ENCODE measurements at regions of chr1 and their contacts with region 1.

Region 1: DNA sequence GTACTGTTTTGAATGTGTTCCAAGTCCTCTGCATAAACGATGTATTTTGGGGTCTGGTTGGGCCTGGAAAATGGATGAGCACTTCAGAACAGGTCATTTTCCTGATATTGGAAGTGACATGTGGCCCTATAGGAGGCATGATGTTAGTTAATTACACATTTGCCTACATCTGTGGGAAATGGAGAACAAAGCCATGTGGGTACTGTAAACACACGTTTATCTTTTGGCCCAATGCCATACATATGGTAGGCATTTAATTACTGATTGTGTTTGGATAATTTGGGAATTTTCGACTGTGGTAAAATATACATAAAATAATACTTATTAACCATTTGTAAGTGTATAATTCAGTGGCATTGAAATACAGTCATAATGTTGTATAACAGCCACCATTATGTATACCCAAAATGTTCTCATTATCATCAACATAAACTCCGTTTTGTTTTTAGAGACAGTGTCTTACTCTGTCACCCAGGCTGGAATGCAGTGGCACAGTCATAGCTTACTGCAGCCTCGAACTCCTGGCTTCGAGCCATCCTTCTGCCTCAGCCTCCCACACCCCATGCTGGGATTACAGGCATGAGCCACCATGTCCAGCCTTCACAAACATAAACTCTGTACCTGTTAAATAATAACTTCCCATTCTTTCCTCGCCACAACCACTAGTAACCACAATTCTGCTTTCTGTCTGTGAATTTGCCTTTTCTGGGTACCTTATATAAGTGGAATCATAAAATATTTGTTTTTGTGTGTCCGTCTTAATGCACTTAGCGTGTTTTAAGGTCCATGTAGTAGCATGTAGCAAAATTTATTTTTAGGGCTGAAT is 11.9 kb upstream of the RNPEP start:
- DNase-seq: no peak
- ATAC-seq: no peak
- H3K4me3 ChIP-seq: no peak overlapping the region
- H3K27ac ChIP-seq: no peak overlapping the region
- H3K4me1 ChIP-seq: no peaks in the 10 kb centered on the region
- H3K27me3 ChIP-seq: no peaks in the 10 kb centered on the region
- CTCF ChIP-seq: no peak
- EP300 ChIP-seq: no peak
- POLR2A ChIP-seq: no peak
- RAD21 ChIP-seq: no peak

Region 2: GRCh38 chr1:201828820-201829774 is 141.4 kb before region 1 on chr1 and contains the start of gene IPO9:
- CTCF ChIA-PET with region 1: no interaction called
- POLR2A ChIA-PET with region 1: no interaction called
- in situ Hi-C with region 1: no loop called
- intact Hi-C with region 1: loop called (anchors 2 kb)
- DNase-seq: peak; percentile 86
- ATAC-seq: peak; percentile 96
- H3K4me3 ChIP-seq: peak within 1 kb of the TSS; percentile 96 to 100 (median 100)
- H3K27ac ChIP-seq: peak within 1 kb of the TSS; percentile 92
- H3K4me1 ChIP-seq: peaks cover 49% of the 10 kb centered on the region
- H3K27me3 ChIP-seq: no peaks in the 10 kb centered on the region; a peak in 1 of 5 replicates
- CTCF ChIP-seq: peak; percentile 88
- EP300 ChIP-seq: no peak
- POLR2A ChIP-seq: peak; percentile 72 to 80
- RAD21 ChIP-seq: peak; percentile 40; the same call in 1 of the 2 replicates
- total RNA-seq, gene IPO9: 34.8 and 54.2 TPM in 2 replicates

Region 3: GRCh38 chr1:201877877-201878401 is 92.6 kb before region 1 on chr1:
- CTCF ChIA-PET with region 1: interaction called, 4 read pairs
- POLR2A ChIA-PET with region 1: interaction called, 3 read pairs
- in situ Hi-C with region 1: no loop called
- intact Hi-C with region 1: loop called (anchors 1 kb)
- DNase-seq: peak; percentile 40
- ATAC-seq: peak; percentile 69
- H3K4me3 ChIP-seq: no peak overlapping the region
- H3K27ac ChIP-seq: no peak overlapping the region
- H3K4me1 ChIP-seq: no peaks in the 10 kb centered on the region
- H3K27me3 ChIP-seq: no peaks in the 10 kb centered on the region
- CTCF ChIP-seq: peak; percentile 63
- EP300 ChIP-seq: no peak
- POLR2A ChIP-seq: no peak
- RAD21 ChIP-seq: no peak

Region 4: DNA sequence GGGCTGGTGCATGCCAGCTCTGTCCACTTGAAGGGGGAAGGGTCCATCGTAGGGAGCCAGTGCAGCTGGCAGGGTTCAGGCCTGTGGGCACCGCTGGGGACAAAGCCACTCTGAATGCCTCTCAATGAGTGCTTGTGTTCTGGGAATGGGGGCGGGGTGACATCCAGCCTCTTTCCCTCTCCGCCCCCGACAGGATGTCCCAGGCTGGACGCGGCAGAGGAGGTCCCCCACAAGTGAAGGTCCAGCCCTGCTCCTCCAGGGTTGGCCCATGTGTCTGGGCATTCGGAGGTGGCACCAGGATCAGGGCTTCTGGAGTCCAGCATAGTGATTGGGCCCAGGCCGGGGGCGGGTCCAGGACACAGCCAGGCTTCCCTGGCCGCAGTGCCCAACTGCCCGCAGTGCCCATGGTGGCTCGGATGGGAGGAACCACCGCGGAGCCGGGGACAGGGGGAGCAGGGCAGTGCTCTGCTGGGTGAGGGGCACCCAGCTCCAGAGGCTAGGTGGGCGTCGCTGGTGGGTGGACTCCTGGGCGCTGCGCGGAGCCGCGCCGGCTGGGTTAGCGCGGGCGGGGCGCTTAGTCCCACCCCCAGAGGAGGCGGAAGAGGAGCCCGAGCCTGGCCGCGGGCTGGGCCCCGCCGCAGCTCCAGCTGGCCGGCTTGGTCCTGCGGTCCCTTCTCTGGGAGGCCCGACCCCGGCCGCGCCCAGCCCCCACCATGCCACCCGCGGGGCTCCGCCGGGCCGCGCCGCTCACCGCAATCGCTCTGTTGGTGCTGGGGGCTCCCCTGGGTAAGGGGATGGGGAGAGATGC is 82.1 kb before region 1 on chr1 and contains the start of gene SHISA4:
- CTCF ChIA-PET with region 1: no interaction called
- POLR2A ChIA-PET with region 1: no interaction called
- in situ Hi-C with region 1: loop called (anchors 5 kb)
- intact Hi-C with region 1: no loop called
- DNase-seq: peak; percentile 29
- ATAC-seq: peak; percentile 63
- H3K4me3 ChIP-seq: peak within 1 kb of the TSS; percentile 57 to 75 (median 65)
- H3K27ac ChIP-seq: no peak within 1 kb of the TSS
- H3K4me1 ChIP-seq: peaks cover 27% of the 10 kb centered on the region
- H3K27me3 ChIP-seq: peaks cover 5 to 36% of the 10 kb centered on the region in 2 experiments; a peak in 3 of 5 replicates
- CTCF ChIP-seq: no peak; the same call in 1 of the 2 replicates
- EP300 ChIP-seq: no peak
- POLR2A ChIP-seq: no peak
- RAD21 ChIP-seq: no peak
- total RNA-seq, gene SHISA4: 0.24 and 0.51 TPM in 2 replicates

Region 5: GRCh38 chr1:202037706-202038296 is 67.3 kb after region 1 on chr1:
- CTCF ChIA-PET with region 1: no interaction called
- POLR2A ChIA-PET with region 1: no interaction called
- in situ Hi-C with region 1: no loop called
- intact Hi-C with region 1: no loop called
- DNase-seq: no peak
- ATAC-seq: no peak
- H3K4me3 ChIP-seq: no peak overlapping the region
- H3K27ac ChIP-seq: no peak overlapping the region
- H3K4me1 ChIP-seq: peaks cover 66% of the 10 kb centered on the region
- H3K27me3 ChIP-seq: no peaks in the 10 kb centered on the region
- CTCF ChIP-seq: no peak
- EP300 ChIP-seq: no peak
- POLR2A ChIP-seq: no peak
- RAD21 ChIP-seq: no peak